ENCODE measurements at regions of chr1 and their contacts with region 1.

Region 1: GRCh38 chr1:93304716-93305138 is 41.0 kb upstream of the DR1 start:
- DNase-seq: peak; percentile 79
- ATAC-seq: peak; percentile 94
- H3K4me3 ChIP-seq: no peak overlapping the region
- H3K27ac ChIP-seq: no peak overlapping the region
- H3K4me1 ChIP-seq: no peaks in the 10 kb centered on the region
- H3K27me3 ChIP-seq: no peaks in the 10 kb centered on the region
- CTCF ChIP-seq: peak; percentile 90
- POLR2A ChIP-seq: 0 out of 2 replicates have a peak, but pooled peaks have one; percentile 31
- RAD21 ChIP-seq: peak; percentile 95

Region 2: DNA sequence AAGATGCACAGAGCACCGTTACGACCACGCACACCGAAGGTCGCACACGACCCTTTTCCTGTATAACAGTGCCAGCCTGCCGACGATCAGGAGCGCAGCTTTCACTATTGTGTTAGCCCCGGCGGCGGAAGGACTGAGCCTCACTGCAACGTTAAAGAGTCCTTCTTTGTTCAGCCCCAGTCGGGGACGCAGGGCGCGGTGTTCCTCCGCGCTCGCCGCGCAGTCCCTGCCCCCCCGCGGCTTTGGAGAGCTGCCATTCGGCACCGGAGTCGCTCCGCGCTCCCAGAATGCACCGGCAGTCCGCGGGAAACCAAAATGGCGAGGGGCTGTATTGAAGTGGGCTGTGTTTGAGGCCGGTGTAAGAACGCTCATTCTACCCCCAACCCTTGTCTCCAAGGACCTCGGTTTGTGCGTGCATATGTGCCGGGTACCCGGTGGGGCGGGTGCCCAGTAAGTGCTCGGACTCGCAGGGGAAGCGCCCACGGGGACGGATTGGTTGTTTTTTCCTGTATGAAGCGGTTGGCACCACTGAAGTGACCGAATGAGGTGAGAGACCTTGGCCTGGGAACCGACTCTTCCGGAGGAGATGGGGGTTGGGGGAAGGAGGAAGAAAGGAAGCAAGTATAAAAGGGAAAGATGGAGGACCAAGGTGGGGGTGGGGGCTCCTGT is 225.6 kb before region 1 on chr1 and contains the start of gene MTF2:
- CTCF ChIA-PET with region 1: interaction called, 3 read pairs
- POLR2A ChIA-PET with region 1: no interaction called
- dilution Hi-C with region 1: no loop called
- in situ Hi-C with region 1: no loop called
- intact Hi-C with region 1: loop called (anchors 2 kb)
- DNase-seq: peak; percentile 97
- ATAC-seq: peak; percentile 88
- H3K4me3 ChIP-seq: peak within 1 kb of the TSS; percentile 78
- H3K27ac ChIP-seq: peak within 1 kb of the TSS; percentile 77
- H3K4me1 ChIP-seq: no peaks in the 10 kb centered on the region
- H3K27me3 ChIP-seq: no peaks in the 10 kb centered on the region; the same call in 1 of the 2 replicates
- CTCF ChIP-seq: no peak
- POLR2A ChIP-seq: peak; percentile 91
- RAD21 ChIP-seq: 0 out of 2 replicates have a peak, but pooled peaks have one; percentile 3
- total RNA-seq, gene MTF2: 33.3 and 39.8 TPM in 2 replicates

Region 3: GRCh38 chr1:93196591-93196990 is 108.1 kb before region 1 on chr1:
- CTCF ChIA-PET with region 1: no interaction called
- POLR2A ChIA-PET with region 1: no interaction called
- dilution Hi-C with region 1: no loop called
- in situ Hi-C with region 1: no loop called
- intact Hi-C with region 1: no loop called
- DNase-seq: peak; percentile 82
- ATAC-seq: peak; percentile 75
- H3K4me3 ChIP-seq: no peak overlapping the region
- H3K27ac ChIP-seq: no peak overlapping the region
- H3K4me1 ChIP-seq: no peaks in the 10 kb centered on the region; the same call in 1 of the 2 replicates
- H3K27me3 ChIP-seq: no peaks in the 10 kb centered on the region
- CTCF ChIP-seq: no peak
- POLR2A ChIP-seq: no peak
- RAD21 ChIP-seq: no peak

Region 4: DNA sequence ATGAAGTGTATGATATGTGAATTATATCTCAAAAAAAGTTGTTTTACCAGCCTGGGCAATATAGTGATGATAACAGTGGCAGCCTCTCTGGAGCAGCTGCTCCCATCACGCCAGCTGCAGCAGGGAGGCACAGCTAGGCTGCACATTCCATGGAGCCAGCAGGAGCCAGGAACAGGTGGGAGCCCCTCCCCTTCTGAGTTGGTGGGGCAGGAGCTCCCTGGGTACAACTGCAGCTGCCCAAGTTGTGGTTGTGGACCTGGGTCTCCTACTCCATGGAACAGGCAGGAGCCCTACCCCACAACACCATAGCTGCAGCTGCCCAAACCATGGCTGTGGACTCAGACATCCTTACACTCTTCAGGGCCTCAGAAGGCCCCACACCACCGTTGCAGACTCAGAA is 121.5 kb after region 1 on chr1:
- CTCF ChIA-PET with region 1: interaction called, 3 read pairs
- POLR2A ChIA-PET with region 1: no interaction called
- dilution Hi-C with region 1: no loop called
- in situ Hi-C with region 1: loop called (anchors 10 kb)
- intact Hi-C with region 1: no loop called
- DNase-seq: no peak
- ATAC-seq: no peak
- H3K4me3 ChIP-seq: no peak overlapping the region
- H3K27ac ChIP-seq: no peak overlapping the region
- H3K4me1 ChIP-seq: no peaks in the 10 kb centered on the region
- H3K27me3 ChIP-seq: peaks cover 6% of the 10 kb centered on the region
- CTCF ChIP-seq: no peak
- POLR2A ChIP-seq: no peak
- RAD21 ChIP-seq: no peak

Region 5: GRCh38 chr1:93615582-93616150 is 310.9 kb after region 1 on chr1:
- CTCF ChIA-PET with region 1: no interaction called
- POLR2A ChIA-PET with region 1: no interaction called
- dilution Hi-C with region 1: no loop called
- in situ Hi-C with region 1: loop called (anchors 10 kb)
- intact Hi-C with region 1: no loop called
- DNase-seq: peak; percentile 77
- ATAC-seq: peak; percentile 49
- H3K4me3 ChIP-seq: no peak overlapping the region
- H3K27ac ChIP-seq: peak overlapping the region; percentile 62
- H3K4me1 ChIP-seq: peaks cover 44% of the 10 kb centered on the region
- H3K27me3 ChIP-seq: no peaks in the 10 kb centered on the region
- CTCF ChIP-seq: no peak
- POLR2A ChIP-seq: no peak
- RAD21 ChIP-seq: no peak

Region 6: GRCh38 chr1:93666613-93667384 is 362.1 kb after region 1 on chr1:
- CTCF ChIA-PET with region 1: no interaction called
- POLR2A ChIA-PET with region 1: no interaction called
- dilution Hi-C with region 1: no loop called
- in situ Hi-C with region 1: no loop called
- intact Hi-C with region 1: no loop called
- DNase-seq: peak; percentile 72
- ATAC-seq: no peak
- H3K4me3 ChIP-seq: no peak overlapping the region
- H3K27ac ChIP-seq: no peak overlapping the region; the same call in 1 of the 2 replicates
- H3K4me1 ChIP-seq: peaks cover 52% of the 10 kb centered on the region
- H3K27me3 ChIP-seq: no peaks in the 10 kb centered on the region
- CTCF ChIP-seq: no peak
- POLR2A ChIP-seq: no peak
- RAD21 ChIP-seq: no peak

Region 7: GRCh38 chr1:93839307-93839706 is 534.6 kb after region 1 on chr1:
- CTCF ChIA-PET with region 1: interaction called, 3 read pairs
- POLR2A ChIA-PET with region 1: no interaction called
- dilution Hi-C with region 1: no loop called
- in situ Hi-C with region 1: loop called (anchors 10 kb)
- intact Hi-C with region 1: no loop called
- DNase-seq: peak; percentile 95
- ATAC-seq: peak; percentile 82
- H3K4me3 ChIP-seq: no peak overlapping the region
- H3K27ac ChIP-seq: no peak overlapping the region
- H3K4me1 ChIP-seq: peaks cover 5% of the 10 kb centered on the region; the same call in 1 of the 2 replicates
- H3K27me3 ChIP-seq: no peaks in the 10 kb centered on the region
- CTCF ChIP-seq: no peak
- POLR2A ChIP-seq: no peak
- RAD21 ChIP-seq: no peak